Heart right ventricle (tissue), 16 donors: ENCODE measurements at regions of chr15 and their contacts with region 1.

Region 1: DNA sequence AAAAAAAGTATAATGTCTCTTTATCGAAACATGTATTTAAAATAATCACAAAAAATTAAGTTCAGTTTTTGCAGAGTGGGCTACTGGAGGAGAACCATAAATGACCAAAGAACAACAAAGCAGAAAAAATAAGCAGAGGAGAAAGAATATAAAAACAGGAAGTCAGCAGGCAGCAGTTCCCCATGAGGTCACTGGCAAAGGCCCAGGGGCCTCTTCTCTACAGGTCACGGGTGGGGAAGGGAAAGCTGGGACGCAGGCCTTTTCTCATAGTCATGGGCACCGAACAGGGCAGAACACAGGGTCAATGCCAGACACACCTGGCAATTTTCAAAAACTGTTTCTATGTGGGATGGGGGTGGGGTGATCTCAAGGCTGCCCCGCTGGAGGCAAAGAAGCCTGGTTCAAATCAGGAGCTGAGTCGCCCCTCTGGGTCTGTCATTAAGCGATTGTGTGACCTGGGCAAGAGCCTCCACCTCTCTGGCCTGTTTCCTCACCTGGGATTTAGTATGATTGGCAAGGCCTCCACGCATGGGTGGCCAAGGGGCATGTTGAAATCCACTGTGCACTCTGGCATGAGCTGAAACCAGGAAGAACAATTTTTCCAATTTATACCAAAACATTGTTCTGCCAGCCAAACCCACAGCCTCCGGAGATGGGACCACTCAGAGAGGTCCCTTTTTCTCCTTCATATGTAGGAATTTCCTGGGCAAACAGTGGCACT is 43.8 kb upstream of the UACA start:
- DNase-seq: peak; percentile 49 to 62
- ATAC-seq: peak in 6 of 8 donors; percentile 19 to 63 (median 55)
- H3K4me3 ChIP-seq: no peak overlapping the region
- H3K27ac ChIP-seq: peak overlapping the region in 5 of 10 donors; percentile 14 to 74 (median 50)
- H3K4me1 ChIP-seq: peaks cover 0 to 38% (median 12%) of the 10 kb centered on the region in 9 donors
- H3K27me3 ChIP-seq: no peaks in the 10 kb centered on the region
- CTCF ChIP-seq: no peak

Region 2: DNA sequence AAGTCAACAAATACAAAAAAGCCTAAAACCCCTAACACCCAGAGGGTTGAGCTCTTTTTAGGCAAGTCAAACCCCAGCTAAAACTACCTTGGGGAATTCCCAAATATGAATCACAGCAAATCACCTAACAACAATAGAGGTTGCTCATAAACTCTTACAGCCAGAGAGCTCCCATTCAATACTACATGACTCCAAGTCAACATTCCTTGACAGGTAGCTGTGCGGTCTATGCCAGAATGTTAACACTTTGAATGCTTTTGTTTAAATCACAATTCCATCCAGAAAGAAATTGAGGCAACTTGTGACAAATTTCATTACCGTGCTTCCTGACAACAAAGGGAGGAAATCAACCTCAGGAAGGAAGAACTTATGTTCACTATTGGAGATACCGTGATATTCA is 36.3 kb before region 1 on chr15:
- intact Hi-C with region 1: loop called in 4 of 10 experiments (anchors 5 kb)
- DNase-seq: no peak
- ATAC-seq: no peak
- H3K4me3 ChIP-seq: no peak overlapping the region
- H3K27ac ChIP-seq: peak overlapping the region in 1 of 10 donors; percentile 10
- H3K4me1 ChIP-seq: peaks cover 0 to 36% (median 14%) of the 10 kb centered on the region in 9 donors
- H3K27me3 ChIP-seq: no peaks in the 10 kb centered on the region
- CTCF ChIP-seq: no peak